Activated CD4-positive, alpha-beta T cell treated with anti-CD3 and anti-CD28 coated beads for 36 hours (primary cell): ENCODE measurements at regions of chr17 and their contacts with region 1.

Region 1: DNA sequence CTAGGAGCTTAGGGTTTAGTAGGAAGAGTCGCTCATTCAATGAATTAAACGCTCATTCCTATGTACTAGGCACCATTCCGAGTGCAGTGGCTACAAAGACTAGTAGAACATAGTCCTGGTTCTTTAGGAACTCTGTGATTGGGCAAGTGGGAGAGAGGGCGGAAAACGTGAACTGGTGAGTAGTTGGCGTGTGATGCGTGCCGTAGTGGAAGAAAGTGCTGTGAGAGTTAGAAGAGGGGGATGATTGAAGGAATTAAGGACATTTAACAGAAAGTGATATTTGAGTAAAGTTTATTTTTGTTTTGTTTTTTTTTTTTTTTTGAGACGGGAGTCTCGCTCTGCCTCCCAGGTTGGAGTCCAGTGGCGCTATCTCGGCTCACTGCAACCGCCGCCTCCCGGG is 7.9 kb upstream of the SLFN14 start:
- DNase-seq: peak; percentile 75
- ATAC-seq: peak; percentile 58
- H3K4me3 Mint-ChIP-seq: peak overlapping the region; percentile 95
- H3K27ac Mint-ChIP-seq: peak overlapping the region; percentile 86
- H3K4me1 Mint-ChIP-seq: peaks cover 25% of the 10 kb centered on the region
- H3K27me3 Mint-ChIP-seq: no peaks in the 10 kb centered on the region

Region 2: DNA sequence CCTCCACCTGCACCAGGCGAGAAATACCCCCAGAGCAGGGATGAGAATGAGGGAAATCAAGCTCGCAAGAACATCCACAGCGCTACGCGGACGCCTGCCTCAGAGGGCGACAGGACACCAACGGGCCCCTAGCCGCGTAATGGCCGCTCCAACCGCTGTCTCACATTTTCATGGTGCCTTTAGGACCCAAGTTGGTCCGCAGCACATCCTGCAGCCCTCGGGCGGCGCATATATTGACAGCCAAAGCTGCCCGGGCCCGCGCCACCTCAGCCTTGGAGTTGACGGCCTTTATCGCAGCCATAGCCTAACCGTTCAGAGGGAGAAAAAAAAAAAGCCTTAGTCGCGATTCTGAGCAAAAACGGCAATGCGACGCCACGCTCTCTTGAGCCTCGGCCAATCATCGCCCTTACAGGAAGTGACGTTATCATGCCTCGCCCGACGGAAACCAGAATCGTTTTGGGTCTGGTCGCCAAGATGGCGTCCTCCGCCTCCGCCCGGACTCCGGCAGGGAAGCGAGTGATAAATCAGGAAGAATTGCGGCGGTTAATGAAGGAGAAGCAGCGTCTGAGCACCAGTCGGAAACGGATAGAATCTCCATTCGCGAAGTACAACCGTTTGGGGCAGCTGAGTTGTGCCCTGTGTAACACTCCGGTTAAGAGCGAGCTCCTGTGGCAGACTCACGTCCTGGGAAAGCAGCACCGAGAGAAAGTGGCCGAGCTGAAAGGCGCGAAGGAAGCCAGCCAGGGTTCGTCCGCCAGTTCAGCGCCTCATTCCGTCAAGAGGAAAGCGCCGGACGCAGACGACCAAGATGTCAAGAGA is 607.2 kb before region 1 on chr17 and contains the starts of genes CCT6B and ZNF830:
- CTCF ChIA-PET with region 1: no interaction called
- POLR2A ChIA-PET with region 1: no interaction called
- intact Hi-C with region 1: loop called in 1 of 2 experiments (anchors 5 kb)
- DNase-seq: peak; percentile 95
- ATAC-seq: peak; percentile 91
- H3K4me3 Mint-ChIP-seq: peak within 1 kb of the TSS; percentile 99
- H3K27ac Mint-ChIP-seq: peak within 1 kb of the TSS; percentile 100
- H3K4me1 Mint-ChIP-seq: peaks cover 26% of the 10 kb centered on the region
- H3K27me3 Mint-ChIP-seq: no peaks in the 10 kb centered on the region
- total RNA-seq, gene CCT6B: 0.95 to 1.6 TPM
- total RNA-seq, gene ZNF830: 20.0 TPM

Region 3: GRCh38 chr17:35521150-35521549 is 47.4 kb before region 1 on chr17:
- CTCF ChIA-PET with region 1: no interaction called
- POLR2A ChIA-PET with region 1: no interaction called
- intact Hi-C with region 1: no loop called
- DNase-seq: no peak
- ATAC-seq: no peak
- H3K4me3 Mint-ChIP-seq: no peak overlapping the region
- H3K27ac Mint-ChIP-seq: peak overlapping the region; percentile 38
- H3K4me1 Mint-ChIP-seq: peaks cover 90% of the 10 kb centered on the region
- H3K27me3 Mint-ChIP-seq: no peaks in the 10 kb centered on the region